CD4-positive, alpha-beta T cell (primary cell): ENCODE measurements at regions of chr3 and their contacts with region 1.

Region 1: GRCh38 chr3:46488735-46489361 is 8.9 kb upstream of the RTP3 start:
- DNase-seq: peak; percentile 88 to 98 (median 94)
- ATAC-seq: peak; percentile 96
- H3K4me3 ChIP-seq: peak overlapping the region; percentile 46
- H3K4me3 Mint-ChIP-seq: peak overlapping the region; percentile 30
- H3K27ac ChIP-seq: no peak overlapping the region
- H3K27ac Mint-ChIP-seq: peak overlapping the region; percentile 62
- H3K4me1 ChIP-seq: peaks cover 15% of the 10 kb centered on the region
- H3K4me1 Mint-ChIP-seq: peaks cover 19% of the 10 kb centered on the region
- H3K27me3 ChIP-seq: no peaks in the 10 kb centered on the region
- H3K27me3 Mint-ChIP-seq: no peaks in the 10 kb centered on the region
- CTCF ChIP-seq: peak; percentile 100

Region 2: GRCh38 chr3:46524832-46525231 is 36.0 kb after region 1 on chr3:
- CTCF ChIA-PET with region 1: interaction called, 14 read pairs
- POLR2A ChIA-PET with region 1: no interaction called
- intact Hi-C with region 1: no loop called
- DNase-seq: no peak
- ATAC-seq: no peak
- H3K4me3 ChIP-seq: no peak overlapping the region
- H3K4me3 Mint-ChIP-seq: no peak overlapping the region
- H3K27ac ChIP-seq: no peak overlapping the region
- H3K27ac Mint-ChIP-seq: no peak overlapping the region
- H3K4me1 ChIP-seq: no peaks in the 10 kb centered on the region
- H3K4me1 Mint-ChIP-seq: no peaks in the 10 kb centered on the region
- H3K27me3 ChIP-seq: no peaks in the 10 kb centered on the region
- H3K27me3 Mint-ChIP-seq: no peaks in the 10 kb centered on the region
- CTCF ChIP-seq: no peak

Region 3: DNA sequence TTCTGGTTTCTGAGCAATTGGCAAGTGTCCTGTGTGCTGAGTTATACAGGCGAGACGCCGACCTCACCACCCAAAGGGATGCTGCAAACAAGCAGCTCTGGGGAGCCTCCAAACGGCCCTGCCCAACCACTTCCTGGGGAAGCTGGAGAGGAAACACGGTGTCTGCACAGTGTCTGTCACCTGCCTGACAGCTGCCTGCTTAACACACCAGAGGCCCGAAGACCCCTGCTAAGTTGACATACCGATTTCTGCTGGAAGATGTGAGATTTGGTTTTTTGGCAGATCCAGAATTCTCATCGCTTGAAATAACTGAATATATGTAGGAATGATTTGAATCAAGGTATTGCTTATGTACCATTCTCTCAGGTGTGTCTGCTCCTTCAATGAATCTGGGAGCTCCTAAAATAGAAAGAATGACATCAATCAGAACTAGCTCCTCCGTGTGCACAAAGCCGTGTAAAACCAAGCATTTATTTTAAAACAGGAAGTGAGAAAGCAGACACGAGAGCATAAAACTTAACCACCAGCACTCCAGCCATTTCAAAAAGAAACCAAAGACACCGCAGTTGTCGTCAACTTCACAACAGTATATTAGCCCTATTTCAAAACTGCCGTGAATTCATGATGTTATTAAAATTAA is 50.1 kb after region 1 on chr3:
- CTCF ChIA-PET with region 1: interaction called, 145 read pairs
- POLR2A ChIA-PET with region 1: interaction called, 45 read pairs
- intact Hi-C with region 1: loop called in 1 of 2 experiments (anchors 1 kb)
- DNase-seq: peak; percentile 75 to 95 (median 86)
- ATAC-seq: peak; percentile 90
- H3K4me3 ChIP-seq: peak overlapping the region; percentile 44
- H3K4me3 Mint-ChIP-seq: peak overlapping the region; percentile 62
- H3K27ac ChIP-seq: peak overlapping the region; percentile 68 to 92
- H3K27ac Mint-ChIP-seq: peak overlapping the region; percentile 95
- H3K4me1 ChIP-seq: peaks cover 45% of the 10 kb centered on the region
- H3K4me1 Mint-ChIP-seq: peaks cover 56% of the 10 kb centered on the region
- H3K27me3 ChIP-seq: no peaks in the 10 kb centered on the region
- H3K27me3 Mint-ChIP-seq: no peaks in the 10 kb centered on the region
- CTCF ChIP-seq: no peak

Region 4: GRCh38 chr3:46558184-46559043 is 69.6 kb after region 1 on chr3:
- CTCF ChIA-PET with region 1: interaction called, 243 read pairs
- POLR2A ChIA-PET with region 1: interaction called, 29 read pairs
- intact Hi-C with region 1: loop called (anchors 1 kb)
- DNase-seq: peak; percentile 60 to 91 (median 73)
- ATAC-seq: peak; percentile 98
- H3K4me3 ChIP-seq: peak overlapping the region; percentile 53
- H3K4me3 Mint-ChIP-seq: peak overlapping the region; percentile 76
- H3K27ac ChIP-seq: no peak overlapping the region
- H3K27ac Mint-ChIP-seq: peak overlapping the region; percentile 54
- H3K4me1 ChIP-seq: peaks cover 12% of the 10 kb centered on the region
- H3K4me1 Mint-ChIP-seq: peaks cover 13% of the 10 kb centered on the region
- H3K27me3 ChIP-seq: no peaks in the 10 kb centered on the region
- H3K27me3 Mint-ChIP-seq: no peaks in the 10 kb centered on the region
- CTCF ChIP-seq: peak; percentile 91

Region 5: GRCh38 chr3:46629551-46630517 is 141.0 kb after region 1 on chr3:
- CTCF ChIA-PET with region 1: interaction called, 122 read pairs
- POLR2A ChIA-PET with region 1: interaction called, 24 read pairs
- intact Hi-C with region 1: loop called (anchors 1 kb)
- DNase-seq: peak; percentile 65 to 90 (median 75)
- ATAC-seq: peak; percentile 95
- H3K4me3 ChIP-seq: peak overlapping the region; percentile 46
- H3K4me3 Mint-ChIP-seq: peak overlapping the region; percentile 76
- H3K27ac ChIP-seq: peak overlapping the region in 1 of 2 donors; percentile 10
- H3K27ac Mint-ChIP-seq: peak overlapping the region; percentile 89
- H3K4me1 ChIP-seq: peaks cover 20% of the 10 kb centered on the region
- H3K4me1 Mint-ChIP-seq: peaks cover 34% of the 10 kb centered on the region
- H3K27me3 ChIP-seq: no peaks in the 10 kb centered on the region
- H3K27me3 Mint-ChIP-seq: peaks cover 3% of the 10 kb centered on the region
- CTCF ChIP-seq: peak; percentile 100